HEK293T (cell line): ENCODE measurements at regions of chr10 and their contacts with region 1.

Region 1: GRCh38 chr10:69969977-69970376 is 82.7 kb upstream of the MACROH2A2 start:
- DNase-seq: no peak

Region 2: DNA sequence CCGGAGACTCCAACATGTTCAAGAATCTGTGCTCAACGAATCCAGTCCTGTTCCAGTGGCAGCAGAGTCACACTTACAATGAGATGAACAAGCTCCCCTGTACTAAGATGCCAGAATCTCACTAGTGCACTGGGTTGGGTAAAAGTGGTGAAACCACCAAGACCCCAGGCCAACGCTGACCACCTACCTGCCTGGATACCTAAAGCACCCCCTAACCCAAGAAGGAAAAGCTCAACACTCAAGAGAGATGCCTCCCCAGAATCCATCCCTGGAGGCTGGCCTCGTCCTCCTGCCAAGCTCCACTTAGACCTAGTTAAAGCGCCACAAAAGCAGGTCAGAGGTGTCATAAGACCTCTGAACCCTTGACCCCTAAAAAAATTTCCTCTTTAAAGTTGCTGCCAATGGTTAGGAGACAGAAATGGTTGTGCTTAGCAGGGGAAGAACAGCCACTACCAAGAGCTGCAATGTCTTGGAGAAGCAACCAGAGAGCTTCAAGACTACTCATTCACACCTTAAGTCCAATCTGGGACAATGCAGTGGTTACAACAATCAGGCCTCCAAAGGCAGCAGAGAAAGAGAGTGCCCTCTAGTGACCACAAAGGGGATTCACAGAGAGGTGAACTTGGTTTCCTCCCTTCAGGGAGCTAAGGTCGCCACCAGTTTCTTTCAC is 12.0 kb before region 1 on chr10:
- CTCF ChIA-PET with region 1: interaction called, 12 read pairs
- POLR2A ChIA-PET with region 1: no interaction called
- DNase-seq: peak; percentile 78